ENCODE measurements at regions of chr4 and their contacts with region 1.

Region 1: DNA sequence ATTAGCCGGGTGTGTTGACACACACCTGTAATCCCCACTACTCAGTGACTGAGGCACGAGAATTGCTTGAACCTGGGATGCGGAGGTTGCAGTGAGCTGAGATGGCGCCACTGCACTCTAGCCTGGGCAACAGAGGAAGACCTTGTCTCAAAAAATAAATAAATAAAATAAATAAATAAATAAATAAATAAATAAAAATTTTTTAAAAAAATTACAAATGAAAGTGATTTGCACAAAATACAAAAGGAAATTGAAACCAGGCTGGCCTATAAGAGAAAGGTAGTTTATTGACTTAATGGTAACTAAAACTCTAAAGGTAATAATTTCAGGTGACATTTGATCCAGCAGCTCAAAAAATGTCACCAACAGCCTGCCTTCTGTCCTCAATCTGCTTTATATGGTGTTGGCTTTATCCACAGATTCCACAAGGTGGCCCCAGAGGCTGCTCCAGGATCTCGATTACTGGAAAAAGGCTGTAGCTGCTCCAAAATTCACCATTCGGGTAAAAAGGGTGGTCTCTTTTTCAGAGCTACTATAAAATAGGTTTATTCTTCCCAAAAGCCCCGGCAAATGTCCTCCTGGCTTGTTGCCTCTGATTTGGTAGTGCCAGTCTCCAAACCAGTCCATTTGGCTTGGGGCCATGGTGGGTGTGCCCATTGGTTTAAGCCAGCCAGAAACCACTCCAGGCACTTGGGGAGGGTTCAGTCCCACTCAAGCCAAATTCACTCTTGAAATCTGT is 61.4 kb upstream of the TRIM2 start:
- DNase-seq: peak; percentile 83
- H3K4me3 Mint-ChIP-seq: no peak overlapping the region
- H3K27ac Mint-ChIP-seq: no peak overlapping the region
- H3K4me1 Mint-ChIP-seq: peaks cover 4% of the 10 kb centered on the region
- H3K27me3 Mint-ChIP-seq: peaks cover 16% of the 10 kb centered on the region

Region 2: DNA sequence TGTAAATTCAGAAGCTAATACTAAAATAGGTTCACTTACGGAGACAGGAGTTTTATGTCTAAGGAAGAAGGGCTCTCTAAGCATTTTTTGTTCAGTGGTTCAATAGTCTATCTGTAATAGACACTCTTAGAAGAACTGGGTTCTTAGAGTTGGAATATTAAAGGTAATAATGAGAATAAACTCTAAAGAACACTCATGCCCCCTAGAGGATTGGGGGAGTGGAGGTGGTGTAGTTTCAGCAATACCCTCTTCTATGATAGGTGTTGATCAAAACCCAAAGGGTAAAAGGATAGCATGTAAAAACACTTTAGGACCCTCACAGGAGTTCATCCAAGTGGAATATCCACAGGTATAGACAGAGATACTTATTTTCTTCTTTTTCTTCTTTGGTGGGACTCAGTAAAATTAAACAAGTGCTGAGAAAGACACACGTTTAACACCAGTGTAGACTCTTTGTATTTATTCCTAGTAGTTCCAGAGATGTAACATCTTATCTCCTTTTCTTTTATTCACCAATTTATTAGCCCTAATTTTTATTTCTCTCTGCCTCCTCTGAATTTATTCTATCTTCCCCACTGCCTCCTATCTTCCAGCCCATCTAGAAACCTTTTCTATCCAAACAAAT is 175.9 kb after region 1 on chr4:
- intact Hi-C with region 1: loop called (anchors 1 kb)
- DNase-seq: peak; percentile 62
- H3K4me3 Mint-ChIP-seq: no peak overlapping the region
- H3K27ac Mint-ChIP-seq: no peak overlapping the region
- H3K4me1 Mint-ChIP-seq: no peaks in the 10 kb centered on the region
- H3K27me3 Mint-ChIP-seq: peaks cover 5% of the 10 kb centered on the region

Region 3: GRCh38 chr4:153573881-153574802 is 431.3 kb after region 1 on chr4:
- intact Hi-C with region 1: loop called (anchors 1 kb)
- DNase-seq: peak; percentile 89
- H3K4me3 Mint-ChIP-seq: no peak overlapping the region
- H3K27ac Mint-ChIP-seq: peak overlapping the region; percentile 52
- H3K4me1 Mint-ChIP-seq: peaks cover 49% of the 10 kb centered on the region
- H3K27me3 Mint-ChIP-seq: no peaks in the 10 kb centered on the region

Region 4: GRCh38 chr4:153643406-153644383 is 500.8 kb after region 1 on chr4:
- intact Hi-C with region 1: loop called (anchors 1 kb)
- DNase-seq: no peak
- H3K4me3 Mint-ChIP-seq: no peak overlapping the region
- H3K27ac Mint-ChIP-seq: no peak overlapping the region
- H3K4me1 Mint-ChIP-seq: peaks cover 19% of the 10 kb centered on the region
- H3K27me3 Mint-ChIP-seq: no peaks in the 10 kb centered on the region

Region 5: DNA sequence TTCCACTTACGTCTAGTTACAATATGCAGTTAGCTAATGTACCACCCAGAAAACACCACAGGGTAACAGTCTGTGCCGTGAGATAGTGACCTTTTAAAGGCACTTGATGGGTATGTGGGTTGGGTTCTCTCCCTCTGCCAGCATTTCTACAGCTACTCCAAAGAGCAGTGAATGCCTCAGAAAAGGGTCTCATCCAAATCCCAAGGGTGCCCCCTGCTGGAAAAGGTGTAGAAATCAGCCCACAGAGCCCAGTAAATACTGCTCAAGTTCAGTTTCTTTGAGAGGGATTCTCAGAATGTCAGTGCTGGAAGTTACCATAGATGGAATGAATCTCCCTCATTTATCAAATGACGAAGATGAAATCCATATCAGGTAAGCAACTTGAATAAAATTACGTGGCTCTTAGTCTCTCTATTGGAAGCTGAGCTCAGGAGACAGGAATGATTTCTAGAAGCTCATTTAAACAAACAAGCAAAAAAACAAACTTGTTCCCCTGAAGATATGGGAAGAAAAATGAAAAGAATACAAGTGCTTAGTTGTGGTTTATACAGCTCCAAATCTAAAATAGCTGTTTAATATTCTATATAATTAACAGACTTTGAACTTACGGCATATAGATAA is 607.4 kb after region 1 on chr4:
- intact Hi-C with region 1: loop called (anchors 1 kb)
- DNase-seq: peak; percentile 91
- H3K4me3 Mint-ChIP-seq: no peak overlapping the region
- H3K27ac Mint-ChIP-seq: no peak overlapping the region
- H3K4me1 Mint-ChIP-seq: no peaks in the 10 kb centered on the region
- H3K27me3 Mint-ChIP-seq: peaks cover 16% of the 10 kb centered on the region